Activated T-helper 2 cell treated with anti-CD3 and anti-CD28 coated beads, Interferon-gamma antibody, Interleukin-2, Interleukin-4, amounts not matched to agents 10 μg/mL and 5 μg/mL and 100 μg/mL, durations not matched to agents 14 hours and 24 hours and 36 hours (primary cell): ENCODE measurements at regions of chr13 and their contacts with region 1.

Region 1: GRCh38 chr13:45393941-45394570 is 24.1 kb downstream of the SLC25A30 start:
- DNase-seq: no peak
- H3K4me3 Mint-ChIP-seq: no peak overlapping the region
- H3K27ac Mint-ChIP-seq: no peak overlapping the region
- H3K4me1 Mint-ChIP-seq: peaks cover 36% of the 10 kb centered on the region
- H3K27me3 Mint-ChIP-seq: no peaks in the 10 kb centered on the region

Region 2: GRCh38 chr13:45367358-45367757 is 26.7 kb before region 1 on chr13:
- intact Hi-C with region 1: loop called (anchors 1 kb)
- DNase-seq: peak; percentile 87
- H3K4me3 Mint-ChIP-seq: peak overlapping the region; percentile 41
- H3K27ac Mint-ChIP-seq: peak overlapping the region; percentile 87
- H3K4me1 Mint-ChIP-seq: peaks cover 40% of the 10 kb centered on the region
- H3K27me3 Mint-ChIP-seq: no peaks in the 10 kb centered on the region

Region 3: DNA sequence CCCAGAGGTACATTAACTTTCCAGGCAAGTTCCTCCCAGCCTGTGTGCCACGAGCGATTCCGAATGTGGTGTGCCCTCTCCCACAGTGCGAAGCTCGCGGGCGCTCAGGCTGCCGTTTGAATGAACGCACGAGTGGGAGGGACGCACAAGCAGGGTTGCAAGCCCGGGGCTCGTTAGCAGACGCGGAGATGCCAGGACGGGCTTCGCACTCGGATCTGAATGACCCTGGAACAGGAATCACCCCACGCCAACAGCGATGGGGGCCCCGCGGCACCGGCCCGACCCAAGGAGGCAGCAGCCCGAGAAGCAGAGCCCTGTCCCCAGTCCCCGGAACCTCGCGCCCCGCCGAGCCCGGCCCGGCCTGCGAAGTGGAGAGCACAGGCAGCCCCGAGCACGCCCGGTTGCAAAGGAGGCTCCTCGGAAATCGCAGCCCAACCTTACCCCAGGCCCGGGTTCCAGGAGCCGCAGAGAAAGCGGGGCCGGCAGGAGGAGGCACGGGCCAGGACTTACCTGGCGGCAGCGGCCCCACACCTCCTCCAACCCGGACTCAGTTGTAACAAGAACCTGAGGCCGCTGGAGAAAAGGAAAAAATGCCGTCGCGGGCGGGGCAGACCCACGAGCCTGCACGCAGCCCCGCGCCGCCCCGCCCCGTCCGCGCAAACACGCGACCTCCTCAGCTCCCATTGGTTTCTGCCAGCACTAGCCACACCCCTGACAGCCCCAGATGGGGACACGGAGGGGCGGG is 23.9 kb after region 1 on chr13 and contains the start of gene SLC25A30:
- intact Hi-C with region 1: loop called (anchors 1 kb)
- DNase-seq: peak; percentile 82
- H3K4me3 Mint-ChIP-seq: peak within 1 kb of the TSS; percentile 88
- H3K27ac Mint-ChIP-seq: peak within 1 kb of the TSS; percentile 87
- H3K4me1 Mint-ChIP-seq: peaks cover 12% of the 10 kb centered on the region
- H3K27me3 Mint-ChIP-seq: no peaks in the 10 kb centered on the region
- total RNA-seq, gene SLC25A30: 12.2 and 13.6 TPM in 2 replicates

Region 4: DNA sequence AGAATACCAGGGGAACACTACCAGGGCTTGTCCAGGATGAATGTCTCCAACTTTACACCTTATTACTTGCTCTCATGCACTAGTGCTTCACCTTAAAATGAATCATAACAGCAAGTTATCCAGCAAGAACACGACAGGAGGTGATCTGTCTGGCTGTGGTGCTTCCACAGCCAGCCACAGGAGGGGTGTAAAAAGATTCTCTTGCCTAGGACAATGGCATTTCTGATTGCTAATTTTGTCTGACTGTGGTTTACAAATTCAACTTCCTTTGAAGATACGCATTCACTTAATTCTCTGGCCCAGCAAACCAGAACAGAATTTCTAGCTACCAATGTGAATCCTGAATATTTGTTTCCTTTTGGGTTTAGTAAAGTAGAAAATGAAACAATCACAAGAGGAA is 47.6 kb after region 1 on chr13:
- intact Hi-C with region 1: loop called (anchors 2 kb)
- DNase-seq: no peak
- H3K4me3 Mint-ChIP-seq: no peak overlapping the region
- H3K27ac Mint-ChIP-seq: peak overlapping the region; percentile 20
- H3K4me1 Mint-ChIP-seq: peaks cover 8% of the 10 kb centered on the region
- H3K27me3 Mint-ChIP-seq: peaks cover 18% of the 10 kb centered on the region

Region 5: DNA sequence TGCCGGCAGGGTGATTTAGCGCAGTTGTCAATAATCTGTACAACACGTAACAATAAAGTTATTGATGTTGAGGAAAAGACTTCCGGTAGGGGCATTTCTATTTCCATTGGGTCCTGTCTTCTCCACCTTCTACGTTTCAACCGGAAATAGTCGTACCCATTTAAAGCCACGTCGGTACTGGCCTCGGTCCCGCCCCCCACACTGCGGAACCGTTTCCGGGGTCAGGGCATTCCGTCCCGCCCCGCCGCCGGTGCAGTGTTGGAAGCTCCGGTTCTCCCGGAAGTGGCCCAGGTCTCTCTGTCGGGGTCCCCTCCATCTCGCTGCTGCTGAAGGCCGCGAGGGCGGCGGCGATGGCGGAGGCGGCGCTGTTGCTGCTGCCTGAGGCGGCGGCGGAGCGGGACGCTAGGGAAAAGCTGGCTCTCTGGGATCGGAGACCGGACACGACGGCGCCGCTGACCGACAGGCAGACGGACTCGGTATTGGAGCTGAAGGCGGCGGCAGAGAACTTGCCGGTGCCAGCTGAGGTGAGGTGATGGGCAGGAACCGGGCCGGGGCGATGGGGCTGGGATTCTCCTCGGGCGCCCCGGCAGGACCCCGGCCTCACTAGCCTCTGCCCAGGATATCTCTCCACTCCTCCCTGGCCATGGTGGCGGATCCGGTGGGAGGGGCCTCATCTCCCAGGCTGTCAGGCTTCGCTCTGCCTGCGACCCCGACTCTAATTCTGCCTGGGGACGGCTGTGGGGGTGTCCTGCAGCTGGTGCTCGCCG is 70.8 kb after region 1 on chr13 and contains the start of gene COG3:
- intact Hi-C with region 1: loop called (anchors 2 kb)
- DNase-seq: peak; percentile 94
- H3K4me3 Mint-ChIP-seq: peak within 1 kb of the TSS; percentile 91
- H3K27ac Mint-ChIP-seq: peak within 1 kb of the TSS; percentile 83
- H3K4me1 Mint-ChIP-seq: peaks cover 28% of the 10 kb centered on the region
- H3K27me3 Mint-ChIP-seq: peaks cover 3% of the 10 kb centered on the region
- total RNA-seq, gene COG3: 21.3 and 22.5 TPM in 2 replicates